Activated CD4-positive, alpha-beta T cell treated with anti-CD3 and anti-CD28 coated beads for 36 hours (primary cell): ENCODE measurements at regions of chr2 and their contacts with region 1.

Region 1: DNA sequence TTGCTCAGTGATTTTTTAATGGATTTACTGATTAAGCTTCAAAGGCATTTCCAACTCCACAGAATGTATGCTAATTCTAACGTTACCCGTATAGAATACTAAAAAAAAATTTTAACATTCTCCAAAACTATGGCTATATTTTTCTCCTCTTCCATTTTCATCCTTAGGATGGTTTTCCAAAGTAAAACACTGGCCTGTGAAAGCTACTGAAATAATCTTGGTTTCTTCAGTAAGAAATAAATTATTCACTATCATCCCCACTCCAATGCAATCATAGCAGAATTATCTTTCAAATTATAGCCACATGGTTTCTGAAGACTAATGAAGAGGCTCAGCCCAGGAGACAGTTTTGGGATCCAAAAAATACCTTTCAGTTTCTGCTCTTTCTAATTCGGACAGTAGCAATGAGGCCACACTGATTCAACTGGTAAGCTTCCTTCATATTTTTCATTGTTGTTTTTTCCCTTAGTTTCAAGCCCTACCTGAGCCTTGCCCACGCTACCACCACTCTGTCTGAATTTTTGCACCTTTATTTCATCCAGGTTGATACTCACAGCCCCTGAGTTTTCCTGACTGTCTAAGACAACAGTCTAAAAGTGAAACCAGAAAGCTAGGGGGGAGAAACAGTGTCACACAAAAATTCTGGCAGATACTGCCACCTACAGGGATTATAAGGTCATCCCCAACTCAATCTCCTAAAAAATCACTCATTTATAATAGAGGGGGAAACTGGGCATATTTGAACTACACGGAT is 887.9 kb downstream of the NRXN1 start:
- DNase-seq: peak; percentile 3
- ATAC-seq: peak; percentile 71
- H3K4me3 Mint-ChIP-seq: peak overlapping the region; percentile 58
- H3K27ac Mint-ChIP-seq: peak overlapping the region; percentile 53
- H3K4me1 Mint-ChIP-seq: peaks cover 5% of the 10 kb centered on the region
- H3K27me3 Mint-ChIP-seq: no peaks in the 10 kb centered on the region

Region 2: DNA sequence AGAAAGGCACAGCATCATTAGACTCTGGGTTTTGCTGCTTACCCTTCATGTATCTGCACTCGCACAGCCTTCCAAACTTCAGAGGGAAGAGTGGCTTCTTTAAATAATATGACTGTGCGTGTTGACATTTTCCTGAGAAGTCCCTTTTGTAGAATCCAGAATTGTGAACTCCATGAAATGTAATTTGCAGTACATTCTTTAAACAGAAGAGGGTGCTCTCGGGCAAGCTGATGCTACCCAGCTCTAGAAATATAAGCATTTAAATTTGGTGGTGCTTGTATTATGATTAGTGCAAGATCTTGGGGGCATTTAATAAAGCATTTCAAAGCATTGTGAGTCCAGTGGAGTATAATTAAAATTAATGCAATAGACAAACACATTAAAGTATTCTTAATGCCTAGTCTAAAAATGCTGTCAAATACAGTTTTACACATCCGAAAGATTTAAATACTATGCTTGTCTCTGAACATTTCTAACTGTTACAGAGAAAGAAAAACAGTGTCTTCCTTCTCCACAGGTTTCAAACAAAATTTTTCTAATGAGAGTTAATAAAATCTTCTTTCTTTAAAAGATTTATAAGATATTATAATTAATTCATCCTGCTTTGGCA is 1543.7 kb before region 1 on chr2:
- CTCF ChIA-PET with region 1: no interaction called
- POLR2A ChIA-PET with region 1: no interaction called
- intact Hi-C with region 1: loop called in 1 of 2 experiments (anchors 5 kb)
- DNase-seq: peak; percentile 10
- ATAC-seq: no peak
- H3K4me3 Mint-ChIP-seq: no peak overlapping the region
- H3K27ac Mint-ChIP-seq: no peak overlapping the region
- H3K4me1 Mint-ChIP-seq: no peaks in the 10 kb centered on the region
- H3K27me3 Mint-ChIP-seq: no peaks in the 10 kb centered on the region

Region 3: DNA sequence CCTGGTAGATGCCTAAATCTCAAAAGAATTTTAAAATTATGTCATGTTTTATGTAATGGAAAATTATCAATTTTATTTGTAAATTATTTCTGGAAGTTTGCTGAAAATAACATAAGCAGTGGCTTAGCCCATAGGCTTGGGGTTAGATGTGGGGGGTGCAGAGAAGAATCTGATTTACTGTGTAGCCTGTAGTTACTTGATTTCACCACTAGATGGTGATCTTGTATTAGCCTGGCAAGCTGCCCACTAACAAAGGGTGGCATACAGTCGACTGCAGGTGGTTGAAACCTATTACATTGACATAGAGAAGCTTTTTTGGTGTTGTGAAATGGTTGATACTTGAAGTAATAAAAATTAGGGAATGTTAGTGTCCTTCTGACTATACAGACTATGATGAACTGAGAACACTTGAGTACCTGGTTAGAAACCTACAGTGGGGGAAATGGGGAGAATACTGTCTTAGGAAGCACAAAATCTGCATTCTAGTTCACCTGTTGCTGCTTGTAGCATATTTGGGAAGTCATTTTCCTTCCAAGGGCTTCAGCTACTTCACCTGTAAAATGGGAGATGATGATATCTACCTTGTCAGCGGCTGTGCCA is 1197.5 kb before region 1 on chr2:
- CTCF ChIA-PET with region 1: interaction called, 10 read pairs
- POLR2A ChIA-PET with region 1: no interaction called
- intact Hi-C with region 1: loop called (anchors 1 to 5 kb)
- DNase-seq: peak; percentile 50
- ATAC-seq: peak; percentile 78
- H3K4me3 Mint-ChIP-seq: no peak overlapping the region
- H3K27ac Mint-ChIP-seq: no peak overlapping the region
- H3K4me1 Mint-ChIP-seq: no peaks in the 10 kb centered on the region
- H3K27me3 Mint-ChIP-seq: peaks cover 1% of the 10 kb centered on the region

Region 4: GRCh38 chr2:49616800-49617199 is 527.2 kb before region 1 on chr2:
- CTCF ChIA-PET with region 1: no interaction called
- POLR2A ChIA-PET with region 1: no interaction called
- intact Hi-C with region 1: loop called in 1 of 2 experiments (anchors 5 kb)
- DNase-seq: no peak
- ATAC-seq: no peak
- H3K4me3 Mint-ChIP-seq: no peak overlapping the region
- H3K27ac Mint-ChIP-seq: no peak overlapping the region
- H3K4me1 Mint-ChIP-seq: no peaks in the 10 kb centered on the region
- H3K27me3 Mint-ChIP-seq: no peaks in the 10 kb centered on the region

Region 5: DNA sequence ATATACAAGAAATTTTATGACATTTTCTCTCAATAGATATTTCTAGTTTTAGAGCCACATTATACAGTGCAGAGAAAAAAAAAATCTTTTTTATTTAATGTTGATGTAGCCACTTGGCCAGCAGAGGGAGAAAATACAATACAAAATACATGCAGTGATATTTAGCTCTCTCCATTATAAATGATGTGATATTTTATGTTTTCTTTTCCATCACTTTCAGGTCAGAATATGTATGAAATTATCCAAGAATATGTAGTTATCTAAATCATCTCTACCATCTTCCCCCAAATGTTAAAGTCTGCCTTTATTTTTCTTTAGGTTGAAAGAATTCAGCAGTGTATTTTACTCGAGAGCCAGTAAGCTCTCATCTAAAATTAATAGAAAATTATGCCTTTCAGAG is 456.1 kb before region 1 on chr2:
- CTCF ChIA-PET with region 1: no interaction called
- POLR2A ChIA-PET with region 1: interaction called, 3 read pairs
- intact Hi-C with region 1: loop called in 1 of 2 experiments (anchors 2 kb)
- DNase-seq: no peak
- ATAC-seq: no peak
- H3K4me3 Mint-ChIP-seq: no peak overlapping the region
- H3K27ac Mint-ChIP-seq: no peak overlapping the region
- H3K4me1 Mint-ChIP-seq: no peaks in the 10 kb centered on the region
- H3K27me3 Mint-ChIP-seq: no peaks in the 10 kb centered on the region

Region 6: DNA sequence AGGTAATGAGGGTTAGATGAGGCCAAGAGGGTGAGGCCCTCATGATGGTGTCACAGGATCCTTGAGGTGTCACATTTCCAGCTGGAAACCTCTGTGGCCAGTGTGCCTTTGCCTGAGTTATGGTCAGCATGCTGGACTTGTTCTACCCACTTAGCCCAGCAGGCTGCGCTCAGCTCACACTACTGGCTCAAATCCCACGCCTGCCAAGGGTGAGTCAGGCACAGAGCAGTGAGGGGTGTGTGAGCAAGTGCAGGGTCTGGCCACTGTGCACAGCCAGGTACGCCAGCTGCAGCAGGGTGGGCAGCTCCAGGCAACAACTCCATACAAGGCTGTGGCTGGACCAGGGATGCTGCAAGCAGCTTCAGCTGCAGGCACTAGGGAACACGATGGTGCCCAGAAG is 373.1 kb before region 1 on chr2:
- CTCF ChIA-PET with region 1: interaction called, 3 read pairs
- POLR2A ChIA-PET with region 1: no interaction called
- intact Hi-C with region 1: loop called in 1 of 2 experiments (anchors 5 kb)
- DNase-seq: peak; percentile 21
- ATAC-seq: no peak
- H3K4me3 Mint-ChIP-seq: no peak overlapping the region
- H3K27ac Mint-ChIP-seq: no peak overlapping the region
- H3K4me1 Mint-ChIP-seq: no peaks in the 10 kb centered on the region
- H3K27me3 Mint-ChIP-seq: no peaks in the 10 kb centered on the region

Region 7: DNA sequence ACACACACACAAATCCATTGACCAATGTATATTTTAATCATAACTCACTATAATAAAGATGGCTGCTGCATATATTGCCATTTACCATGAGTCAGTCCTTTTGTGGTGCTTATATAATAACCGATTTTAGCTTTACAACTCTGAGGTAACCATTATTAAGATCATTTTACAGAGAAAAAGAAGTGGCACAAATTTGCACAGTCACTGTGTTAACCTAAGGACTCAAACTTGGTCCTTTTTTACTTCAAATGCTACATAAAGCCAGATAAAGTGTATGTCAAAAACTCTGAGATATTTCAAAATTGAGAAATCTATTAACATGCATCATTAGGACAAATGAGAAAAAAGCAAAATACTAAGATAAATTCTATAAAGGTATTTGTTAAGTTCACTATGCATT is 35.8 kb before region 1 on chr2:
- CTCF ChIA-PET with region 1: no interaction called
- POLR2A ChIA-PET with region 1: no interaction called
- intact Hi-C with region 1: no loop called
- DNase-seq: no peak
- ATAC-seq: no peak
- H3K4me3 Mint-ChIP-seq: no peak overlapping the region
- H3K27ac Mint-ChIP-seq: no peak overlapping the region
- H3K4me1 Mint-ChIP-seq: no peaks in the 10 kb centered on the region
- H3K27me3 Mint-ChIP-seq: no peaks in the 10 kb centered on the region

Region 8: DNA sequence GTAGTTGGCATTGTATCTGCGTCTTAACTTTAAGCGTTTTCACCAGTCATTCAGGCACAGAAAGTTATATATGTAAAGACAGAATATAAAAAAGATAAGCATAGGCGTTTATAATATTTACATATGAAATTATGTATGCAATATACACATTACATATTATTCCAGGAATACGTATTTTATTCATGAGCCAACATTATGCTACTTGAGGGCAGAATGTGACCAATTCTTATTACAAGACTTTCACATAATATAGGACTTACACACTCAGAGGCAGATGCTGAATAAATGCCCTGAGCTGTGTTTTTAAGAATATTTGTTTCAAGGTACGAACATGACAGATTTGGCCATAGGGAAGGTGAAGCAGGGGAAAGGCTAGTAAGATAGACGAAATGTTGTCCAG is 13.3 kb after region 1 on chr2:
- CTCF ChIA-PET with region 1: no interaction called
- POLR2A ChIA-PET with region 1: no interaction called
- intact Hi-C with region 1: no loop called
- DNase-seq: no peak
- ATAC-seq: no peak
- H3K4me3 Mint-ChIP-seq: no peak overlapping the region
- H3K27ac Mint-ChIP-seq: no peak overlapping the region
- H3K4me1 Mint-ChIP-seq: no peaks in the 10 kb centered on the region
- H3K27me3 Mint-ChIP-seq: no peaks in the 10 kb centered on the region

Region 9: GRCh38 chr2:50255931-50256330 is 111.9 kb after region 1 on chr2:
- CTCF ChIA-PET with region 1: no interaction called
- POLR2A ChIA-PET with region 1: no interaction called
- intact Hi-C with region 1: no loop called
- DNase-seq: no peak
- ATAC-seq: no peak
- H3K4me3 Mint-ChIP-seq: no peak overlapping the region
- H3K27ac Mint-ChIP-seq: no peak overlapping the region
- H3K4me1 Mint-ChIP-seq: no peaks in the 10 kb centered on the region
- H3K27me3 Mint-ChIP-seq: no peaks in the 10 kb centered on the region

Region 10: DNA sequence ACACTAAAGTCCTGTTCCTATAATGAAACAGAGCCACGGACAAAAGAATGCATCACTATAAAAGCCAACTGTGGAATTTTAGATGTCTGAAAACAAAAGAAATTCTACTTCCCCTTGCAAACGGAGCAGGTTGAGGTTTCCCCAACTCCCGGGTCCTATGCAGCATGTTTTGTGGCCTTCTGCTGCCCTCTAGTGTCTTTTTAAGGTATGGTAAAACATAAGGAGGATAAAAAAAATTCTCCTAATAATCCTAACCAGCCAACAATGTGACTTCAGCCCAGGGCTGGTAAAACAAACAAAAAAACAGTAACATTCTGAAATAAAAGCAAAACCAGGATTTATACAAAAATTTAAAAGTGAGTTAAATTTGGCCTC is 348.5 kb after region 1 on chr2:
- CTCF ChIA-PET with region 1: interaction called, 3 read pairs
- POLR2A ChIA-PET with region 1: no interaction called
- intact Hi-C with region 1: loop called in 1 of 2 experiments (anchors 10 kb)
- DNase-seq: peak; percentile 39
- ATAC-seq: peak; percentile 53
- H3K4me3 Mint-ChIP-seq: no peak overlapping the region
- H3K27ac Mint-ChIP-seq: no peak overlapping the region
- H3K4me1 Mint-ChIP-seq: peaks cover 12% of the 10 kb centered on the region
- H3K27me3 Mint-ChIP-seq: peaks cover 6% of the 10 kb centered on the region